Naive thymus-derived CD4-positive, alpha-beta T cell (primary cell): ENCODE measurements at regions of chr14 and their contacts with region 1.

Region 1: GRCh38 chr14:22084393-22085281 is 411.0 kb upstream of the OR4E1 start:
- DNase-seq: peak in 6 of 9 donors; percentile 37 to 62 (median 52)
- ATAC-seq: peak; percentile 76
- H3K4me3 ChIP-seq: no peak overlapping the region
- H3K4me3 Mint-ChIP-seq: peak overlapping the region; percentile 41 to 76 (median 62)
- H3K27ac ChIP-seq: no peak overlapping the region
- H3K27ac Mint-ChIP-seq: peak overlapping the region; percentile 60 to 87 (median 75)
- H3K4me1 ChIP-seq: peaks cover 0 to 4% of the 10 kb centered on the region in 2 donors
- H3K4me1 Mint-ChIP-seq: peaks cover 2 to 40% (median 36%) of the 10 kb centered on the region in 7 donors
- H3K27me3 ChIP-seq: no peaks in the 10 kb centered on the region
- H3K27me3 Mint-ChIP-seq: no peaks in the 10 kb centered on the region

Region 2: GRCh38 chr14:22002860-22003309 is 81.8 kb before region 1 on chr14:
- CTCF ChIA-PET with region 1: interaction called, 5 read pairs
- POLR2A ChIA-PET with region 1: no interaction called
- intact Hi-C with region 1: loop called in 1 of 2 experiments (anchors 10 kb)
- DNase-seq: peak; percentile 27 to 71 (median 66)
- ATAC-seq: peak; percentile 89
- H3K4me3 ChIP-seq: peak overlapping the region; percentile 65
- H3K4me3 Mint-ChIP-seq: peak overlapping the region; percentile 78 to 88 (median 84)
- H3K27ac ChIP-seq: peak overlapping the region; percentile 62
- H3K27ac Mint-ChIP-seq: peak overlapping the region; percentile 90 to 96 (median 94)
- H3K4me1 ChIP-seq: peaks cover 6 to 14% of the 10 kb centered on the region in 2 donors
- H3K4me1 Mint-ChIP-seq: peaks cover 3 to 31% (median 29%) of the 10 kb centered on the region in 7 donors
- H3K27me3 ChIP-seq: no peaks in the 10 kb centered on the region
- H3K27me3 Mint-ChIP-seq: no peaks in the 10 kb centered on the region

Region 3: GRCh38 chr14:22065347-22065746 is 19.3 kb before region 1 on chr14:
- CTCF ChIA-PET with region 1: interaction called, 7 read pairs
- POLR2A ChIA-PET with region 1: interaction called, 9 read pairs
- intact Hi-C with region 1: loop called in 1 of 2 experiments (anchors 1 kb)
- DNase-seq: peak in 4 of 9 donors; percentile 26 to 50 (median 37)
- ATAC-seq: no peak
- H3K4me3 ChIP-seq: no peak overlapping the region
- H3K4me3 Mint-ChIP-seq: peak overlapping the region in 9 of 10 donors; percentile 33 to 74 (median 56)
- H3K27ac ChIP-seq: no peak overlapping the region
- H3K27ac Mint-ChIP-seq: peak overlapping the region in 7 of 9 donors; percentile 46 to 89 (median 84)
- H3K4me1 ChIP-seq: peaks cover 0 to 13% of the 10 kb centered on the region in 2 donors
- H3K4me1 Mint-ChIP-seq: peaks cover 4 to 44% (median 37%) of the 10 kb centered on the region in 7 donors
- H3K27me3 ChIP-seq: no peaks in the 10 kb centered on the region
- H3K27me3 Mint-ChIP-seq: no peaks in the 10 kb centered on the region

Region 4: DNA sequence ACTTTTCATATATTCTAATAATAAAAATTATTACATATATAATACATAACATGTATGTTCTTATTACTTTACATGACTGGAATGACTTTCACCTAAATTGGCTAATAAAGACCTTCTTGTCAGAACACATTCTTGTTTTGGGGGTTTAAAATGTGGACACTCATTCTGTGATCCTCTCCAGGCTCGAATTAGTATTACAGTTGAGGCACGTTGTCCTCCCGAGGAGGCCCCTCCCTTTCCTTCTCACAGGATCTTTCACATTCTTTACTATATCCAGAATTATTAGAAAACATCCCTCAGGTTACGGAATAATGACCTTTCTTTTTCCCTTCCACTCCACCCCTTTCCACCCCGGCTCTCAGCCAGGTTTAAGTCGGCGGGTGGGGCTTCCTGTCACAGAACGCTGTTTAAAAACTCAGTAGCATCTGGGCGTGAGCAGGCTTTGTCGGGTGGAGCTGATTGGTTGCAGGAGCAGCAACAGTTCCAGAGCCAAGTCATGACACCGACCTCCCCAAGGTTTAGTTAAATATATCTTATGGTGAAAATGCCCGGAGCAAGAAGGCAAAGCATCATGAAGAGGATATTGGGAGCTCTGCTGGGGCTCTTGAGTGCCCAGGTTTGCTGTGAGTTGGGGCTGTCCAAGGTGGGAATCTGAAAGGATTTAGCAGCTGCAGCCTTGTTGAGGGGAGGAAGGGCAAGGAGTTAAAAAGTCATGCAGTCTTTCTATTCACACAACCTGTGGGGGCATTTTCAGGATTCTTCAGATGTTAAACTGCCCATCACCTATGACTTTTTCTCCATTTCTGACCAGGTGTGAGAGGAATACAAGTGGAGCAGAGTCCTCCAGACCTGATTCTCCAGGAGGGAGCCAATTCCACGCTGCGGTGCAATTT is 14.3 kb before region 1 on chr14:
- CTCF ChIA-PET with region 1: interaction called, 7 read pairs
- POLR2A ChIA-PET with region 1: interaction called, 9 read pairs
- intact Hi-C with region 1: loop called (anchors 1 kb)
- DNase-seq: peak in 7 of 9 donors; percentile 41 to 74 (median 69)
- ATAC-seq: peak; percentile 77
- H3K4me3 ChIP-seq: peak overlapping the region; percentile 83
- H3K4me3 Mint-ChIP-seq: peak overlapping the region; percentile 90 to 97 (median 93)
- H3K27ac ChIP-seq: peak overlapping the region; percentile 63
- H3K27ac Mint-ChIP-seq: peak overlapping the region; percentile 90 to 97 (median 95)
- H3K4me1 ChIP-seq: peaks cover 9 to 13% of the 10 kb centered on the region in 2 donors
- H3K4me1 Mint-ChIP-seq: peaks cover 11 to 64% (median 59%) of the 10 kb centered on the region in 7 donors
- H3K27me3 ChIP-seq: no peaks in the 10 kb centered on the region
- H3K27me3 Mint-ChIP-seq: no peaks in the 10 kb centered on the region

Region 5: GRCh38 chr14:22099942-22100763 is 15.5 kb after region 1 on chr14:
- CTCF ChIA-PET with region 1: interaction called, 16 read pairs
- POLR2A ChIA-PET with region 1: interaction called, 11 read pairs
- intact Hi-C with region 1: loop called (anchors 1 kb)
- DNase-seq: peak in 8 of 9 donors; percentile 31 to 74 (median 56)
- ATAC-seq: peak; percentile 83
- H3K4me3 ChIP-seq: no peak overlapping the region
- H3K4me3 Mint-ChIP-seq: peak overlapping the region in 3 of 10 donors; percentile 47 to 53 (median 48)
- H3K27ac ChIP-seq: no peak overlapping the region
- H3K27ac Mint-ChIP-seq: peak overlapping the region in 2 of 9 donors; percentile 25 to 49
- H3K4me1 ChIP-seq: peaks cover 3 to 29% of the 10 kb centered on the region in 2 donors
- H3K4me1 Mint-ChIP-seq: peaks cover 1 to 62% (median 48%) of the 10 kb centered on the region in 7 donors
- H3K27me3 ChIP-seq: no peaks in the 10 kb centered on the region
- H3K27me3 Mint-ChIP-seq: no peaks in the 10 kb centered on the region